ENCODE measurements at regions of chr1 and their contacts with region 1.

Region 1: GRCh38 chr1:56570924-56571372 is 8.4 kb downstream of the PLPP3 start:
- DNase-seq: no peak
- ATAC-seq: peak; percentile 27

Region 2: GRCh38 chr1:56469640-56470371 is 101.1 kb before region 1 on chr1:
- intact Hi-C with region 1: no loop called
- DNase-seq: no peak
- ATAC-seq: peak; percentile 67

Region 3: GRCh38 chr1:56516539-56517252 is 54.3 kb before region 1 on chr1:
- intact Hi-C with region 1: no loop called
- DNase-seq: no peak
- ATAC-seq: peak; percentile 37

Region 4: GRCh38 chr1:56535939-56536338 is 35.0 kb before region 1 on chr1:
- intact Hi-C with region 1: loop called (anchors 5 kb)
- DNase-seq: no peak
- ATAC-seq: peak; percentile 76

Measured in Right ventricle myocardium superior (tissue), 1 donor.